WTC11 (cell line): ENCODE measurements at regions of chr3 and their contacts with region 1.

Region 1: GRCh38 chr3:185764163-185764979 is 60.5 kb downstream of the IGF2BP2 start:
- DNase-seq: no peak
- ATAC-seq: no peak
- H3K4me3 Mint-ChIP-seq: no peak overlapping the region
- H3K27ac Mint-ChIP-seq: peak overlapping the region; percentile 17
- H3K4me1 Mint-ChIP-seq: peaks cover 80% of the 10 kb centered on the region
- H3K27me3 Mint-ChIP-seq: no peaks in the 10 kb centered on the region
- CTCF ChIP-seq: no peak

Region 2: GRCh38 chr3:185677146-185677829 is 87.1 kb before region 1 on chr3:
- CTCF ChIA-PET with region 1: interaction called, 24 read pairs
- POLR2A ChIA-PET with region 1: interaction called, 3 read pairs
- DNase-seq: no peak
- ATAC-seq: peak; percentile 97
- H3K4me3 Mint-ChIP-seq: no peak overlapping the region
- H3K27ac Mint-ChIP-seq: peak overlapping the region; percentile 29
- H3K4me1 Mint-ChIP-seq: peaks cover 8% of the 10 kb centered on the region
- H3K27me3 Mint-ChIP-seq: no peaks in the 10 kb centered on the region
- CTCF ChIP-seq: peak; percentile 74

Region 3: GRCh38 chr3:185696039-185696438 is 68.3 kb before region 1 on chr3:
- CTCF ChIA-PET with region 1: no interaction called
- POLR2A ChIA-PET with region 1: no interaction called
- DNase-seq: no peak
- ATAC-seq: no peak
- H3K4me3 Mint-ChIP-seq: no peak overlapping the region
- H3K27ac Mint-ChIP-seq: peak overlapping the region; percentile 51; the same call in 1 of the 2 replicates
- H3K4me1 Mint-ChIP-seq: peaks cover 5% of the 10 kb centered on the region
- H3K27me3 Mint-ChIP-seq: no peaks in the 10 kb centered on the region
- CTCF ChIP-seq: no peak

Region 4: GRCh38 chr3:185733980-185734724 is 30.2 kb before region 1 on chr3:
- CTCF ChIA-PET with region 1: interaction called, 79 read pairs
- POLR2A ChIA-PET with region 1: interaction called, 6 read pairs
- DNase-seq: peak; percentile 65
- ATAC-seq: peak; percentile 95
- H3K4me3 Mint-ChIP-seq: no peak overlapping the region
- H3K27ac Mint-ChIP-seq: peak overlapping the region; percentile 95
- H3K4me1 Mint-ChIP-seq: peaks cover 65% of the 10 kb centered on the region
- H3K27me3 Mint-ChIP-seq: no peaks in the 10 kb centered on the region
- CTCF ChIP-seq: peak; percentile 46; the same call in 1 of the 2 replicates

Region 5: GRCh38 chr3:185744997-185745843 is 19.2 kb before region 1 on chr3:
- CTCF ChIA-PET with region 1: interaction called, 20 read pairs
- POLR2A ChIA-PET with region 1: interaction called, 3 read pairs
- DNase-seq: no peak
- ATAC-seq: peak; percentile 39
- H3K4me3 Mint-ChIP-seq: no peak overlapping the region
- H3K27ac Mint-ChIP-seq: peak overlapping the region; percentile 39
- H3K4me1 Mint-ChIP-seq: peaks cover 65% of the 10 kb centered on the region
- H3K27me3 Mint-ChIP-seq: no peaks in the 10 kb centered on the region
- CTCF ChIP-seq: no peak

Region 6: DNA sequence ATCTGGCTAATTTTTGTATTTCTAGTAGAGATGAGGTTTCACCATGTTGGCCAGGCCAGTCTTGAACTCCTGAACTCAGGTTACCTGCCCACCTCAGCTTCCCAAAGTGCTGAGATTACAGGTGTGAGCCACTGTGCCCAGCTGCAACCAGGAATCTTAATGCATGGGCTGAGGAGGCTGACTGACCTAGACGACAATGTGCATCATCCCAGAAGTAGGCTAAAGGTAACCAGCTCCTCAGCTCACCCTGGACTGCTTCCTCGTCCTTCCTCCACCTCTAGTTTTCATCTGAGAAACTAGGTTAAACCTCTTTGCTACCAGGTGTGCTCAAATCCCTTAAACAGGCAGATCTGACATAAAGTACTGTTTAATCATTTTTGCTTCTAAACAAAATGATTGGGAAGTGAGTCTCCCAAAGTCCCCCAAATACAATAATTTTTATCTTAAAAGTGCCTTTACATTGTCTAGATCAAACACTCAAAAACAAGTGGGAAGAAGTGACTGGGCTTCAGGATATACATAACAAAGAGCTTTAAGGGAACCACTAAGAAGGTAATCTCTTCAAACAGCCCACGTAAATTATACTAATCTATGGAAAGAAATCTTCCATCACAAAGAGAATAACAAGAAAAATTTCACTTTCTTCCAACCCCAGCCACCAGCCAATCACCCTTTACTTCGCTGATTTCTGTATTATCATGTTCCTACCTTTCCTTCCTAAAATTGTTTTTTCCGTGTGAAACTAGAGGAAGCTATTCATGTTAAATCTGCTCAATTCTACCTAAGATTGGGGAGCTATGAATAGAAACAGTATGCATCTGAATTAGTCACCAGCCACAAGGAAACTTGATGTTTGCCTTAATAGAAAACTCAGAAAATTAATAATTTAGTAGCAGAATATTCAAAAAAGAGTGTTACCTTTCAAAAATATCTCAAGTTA is 25.8 kb after region 1 on chr3:
- CTCF ChIA-PET with region 1: interaction called, 28 read pairs
- POLR2A ChIA-PET with region 1: interaction called, 3 read pairs
- DNase-seq: no peak
- ATAC-seq: peak; percentile 15; the same call in 1 of the 2 replicates
- H3K4me3 Mint-ChIP-seq: peak overlapping the region; percentile 27
- H3K27ac Mint-ChIP-seq: peak overlapping the region; percentile 95
- H3K4me1 Mint-ChIP-seq: peaks cover 84% of the 10 kb centered on the region
- H3K27me3 Mint-ChIP-seq: no peaks in the 10 kb centered on the region
- CTCF ChIP-seq: no peak

Region 7: GRCh38 chr3:186021673-186022362 is 257.4 kb after region 1 on chr3:
- CTCF ChIA-PET with region 1: no interaction called
- POLR2A ChIA-PET with region 1: no interaction called
- DNase-seq: no peak
- ATAC-seq: no peak
- H3K4me3 Mint-ChIP-seq: no peak overlapping the region
- H3K27ac Mint-ChIP-seq: no peak overlapping the region
- H3K4me1 Mint-ChIP-seq: no peaks in the 10 kb centered on the region; the same call in 1 of the 2 replicates
- H3K27me3 Mint-ChIP-seq: no peaks in the 10 kb centered on the region
- CTCF ChIP-seq: no peak